Heart left ventricle (tissue), 16 donors: ENCODE measurements at regions of chr22 and their contacts with region 1.

Region 1: DNA sequence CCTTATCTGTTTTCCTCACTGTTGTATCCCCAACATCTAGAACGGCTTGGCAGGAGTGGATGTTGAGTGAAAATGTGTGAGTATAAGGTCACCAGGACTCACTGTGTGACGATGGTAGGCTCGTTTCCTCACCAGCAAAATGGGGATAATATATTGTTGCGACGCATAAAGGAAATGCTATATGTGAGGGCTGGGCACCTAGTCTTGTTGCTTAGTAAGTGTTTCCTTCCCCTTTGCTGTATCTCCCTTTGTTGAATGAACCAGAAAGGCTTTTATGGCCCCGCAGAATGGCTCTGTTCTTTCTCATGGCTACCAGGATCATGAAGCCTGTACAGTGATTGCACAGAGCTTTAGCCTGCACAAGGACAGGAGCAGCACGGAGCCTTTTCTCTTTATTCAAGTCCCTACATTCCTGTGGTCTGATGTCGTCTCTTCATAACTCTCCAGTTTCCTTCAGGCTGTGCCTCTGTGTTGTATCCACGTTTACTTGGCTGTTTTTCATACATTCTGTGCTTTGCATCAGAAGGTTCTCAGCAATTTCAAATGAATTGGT is 5.4 kb downstream of the TNRC6B start:
- DNase-seq: no peak
- ATAC-seq: peak; percentile 6 to 48 (median 38)
- H3K4me3 ChIP-seq: peak overlapping the region in 4 of 12 donors; percentile 2 to 17 (median 13)
- H3K27ac ChIP-seq: peak overlapping the region in 11 of 12 donors; percentile 3 to 68 (median 56)
- H3K4me1 ChIP-seq: peaks cover 6 to 90% (median 68%) of the 10 kb centered on the region in 12 donors
- H3K27me3 ChIP-seq: no peaks in the 10 kb centered on the region
- CTCF ChIP-seq: no peak
- POLR2A ChIP-seq: no peak

Region 2: DNA sequence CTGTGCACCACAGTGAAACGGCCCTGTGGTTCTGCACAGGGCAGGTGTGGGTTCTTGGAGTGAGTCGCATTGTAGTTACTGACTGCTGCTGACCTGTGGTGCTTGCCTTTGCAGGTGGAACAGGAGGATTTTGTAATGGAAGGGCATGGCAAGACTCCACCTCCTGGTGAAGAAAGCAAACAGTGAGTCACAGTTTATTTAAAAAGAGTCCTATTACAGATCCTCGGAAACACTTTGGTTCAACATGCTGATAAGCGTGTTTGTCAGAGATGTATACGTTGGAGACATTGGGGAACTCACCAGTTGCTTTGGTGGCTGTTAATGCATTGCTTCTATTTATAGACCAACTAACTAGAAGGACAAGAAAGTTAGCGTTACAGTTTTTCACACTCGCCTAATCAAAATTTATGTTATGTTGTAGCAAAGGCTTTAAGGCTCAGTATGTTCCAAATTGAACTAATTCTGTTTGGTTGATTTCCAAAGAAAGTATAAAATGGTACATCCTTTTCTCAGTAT is 27.0 kb before region 1 on chr22:
- intact Hi-C with region 1: no loop called
- DNase-seq: peak in 1 of 5 donors; percentile 33
- ATAC-seq: peak in 3 of 4 donors; percentile 60 to 93 (median 66)
- H3K4me3 ChIP-seq: no peak overlapping the region
- H3K27ac ChIP-seq: peak overlapping the region in 1 of 12 donors; percentile 38
- H3K4me1 ChIP-seq: peaks cover 0 to 7% (median 1%) of the 10 kb centered on the region in 12 donors
- H3K27me3 ChIP-seq: no peaks in the 10 kb centered on the region
- CTCF ChIP-seq: peak in 1 of 12 donors; percentile 11
- POLR2A ChIP-seq: no peak

Region 3: DNA sequence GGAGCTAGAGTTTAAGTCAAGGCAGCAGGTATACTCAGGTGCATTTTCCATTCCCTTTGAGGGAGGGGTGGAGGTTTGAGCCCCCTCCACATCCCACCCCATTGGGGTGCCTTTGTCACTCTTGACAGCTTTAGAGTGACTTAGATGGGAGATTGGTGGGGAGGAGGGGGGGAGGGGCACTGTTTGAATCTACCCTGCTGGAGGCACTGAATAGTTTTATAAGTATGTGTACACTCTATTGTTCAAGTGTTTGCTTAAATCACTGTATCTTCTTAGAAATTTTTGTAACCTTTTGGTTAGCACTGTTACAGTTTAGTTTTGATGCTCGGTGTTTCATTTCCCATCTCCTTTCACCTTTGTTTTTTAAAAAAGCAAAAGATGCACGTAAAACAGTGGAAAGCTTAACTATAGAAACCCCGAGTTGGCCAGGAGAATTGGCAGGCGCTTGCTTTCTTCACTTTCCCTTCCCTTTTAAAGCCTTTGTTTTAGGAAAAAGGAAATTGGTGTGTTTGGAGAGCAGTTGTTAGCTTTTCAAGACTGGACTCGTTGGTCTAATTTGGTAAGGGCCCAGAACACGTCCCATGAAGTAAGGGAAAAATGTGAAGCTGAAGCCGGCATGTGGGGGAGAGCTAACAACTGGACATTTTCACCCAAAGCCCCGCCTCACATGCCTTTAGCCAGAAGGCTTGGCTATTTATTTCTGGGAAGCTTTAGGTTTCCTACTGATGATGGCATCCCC is 37.4 kb after region 1 on chr22:
- intact Hi-C with region 1: loop called in 1 of 10 experiments (anchors 5 kb)
- DNase-seq: no peak
- ATAC-seq: peak in 3 of 4 donors; percentile 8 to 60 (median 35)
- H3K4me3 ChIP-seq: peak overlapping the region in 1 of 12 donors; percentile 9
- H3K27ac ChIP-seq: peak overlapping the region in 10 of 12 donors; percentile 2 to 67 (median 54)
- H3K4me1 ChIP-seq: peaks cover 0 to 84% (median 60%) of the 10 kb centered on the region in 12 donors
- H3K27me3 ChIP-seq: no peaks in the 10 kb centered on the region
- CTCF ChIP-seq: no peak
- POLR2A ChIP-seq: no peak

Region 4: GRCh38 chr22:40289991-40290459 is 106.9 kb after region 1 on chr22:
- intact Hi-C with region 1: no loop called
- DNase-seq: peak in 3 of 5 donors; percentile 28 to 62 (median 48)
- ATAC-seq: peak; percentile 24 to 82 (median 66)
- H3K4me3 ChIP-seq: peak overlapping the region in 1 of 12 donors; percentile 5
- H3K27ac ChIP-seq: peak overlapping the region in 3 of 12 donors; percentile 8 to 84 (median 20)
- H3K4me1 ChIP-seq: peaks cover 0 to 20% (median 0%) of the 10 kb centered on the region in 12 donors
- H3K27me3 ChIP-seq: no peaks in the 10 kb centered on the region
- CTCF ChIP-seq: no peak
- POLR2A ChIP-seq: no peak